Tibial artery (tissue), 4 donors: ENCODE measurements at regions of chr16 and their contacts with region 1.

Region 1: DNA sequence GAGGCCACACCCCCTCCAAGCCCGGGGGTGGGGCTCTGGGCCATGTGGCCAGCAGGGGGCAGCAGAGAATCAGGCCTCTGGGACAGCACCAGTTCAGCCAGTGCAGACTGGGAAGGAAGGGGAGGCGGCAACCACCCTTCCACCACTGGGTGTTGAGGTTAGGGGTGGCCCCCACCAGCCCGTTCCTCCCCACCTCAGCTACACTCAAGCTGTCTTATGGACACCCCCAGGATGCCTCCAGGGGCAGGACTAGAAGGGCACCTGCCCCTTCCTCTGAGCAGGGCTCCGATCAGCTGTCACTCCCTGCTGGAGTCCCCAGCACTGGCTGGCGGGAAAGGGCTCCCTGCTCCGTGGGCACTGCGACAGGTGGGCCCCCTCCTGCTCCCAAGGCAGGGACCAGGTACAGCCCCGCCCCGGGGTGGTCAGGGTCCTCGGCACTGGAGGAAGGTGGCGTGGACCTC is 21.8 kb downstream of the KATNB1 start:
- DNase-seq: peak; percentile 85 to 93
- H3K4me3 ChIP-seq: no peak overlapping the region
- H3K27ac ChIP-seq: peak overlapping the region in 1 of 2 donors; percentile 35
- H3K4me1 ChIP-seq: peaks cover 0 to 6% (median 2%) of the 10 kb centered on the region in 4 donors
- H3K27me3 ChIP-seq: no peaks in the 10 kb centered on the region
- CTCF ChIP-seq: peak; percentile 94 to 97

Region 2: GRCh38 chr16:57802341-57803133 is 45.2 kb after region 1 on chr16 and contains the start of gene KIFC3:
- intact Hi-C with region 1: no loop called
- DNase-seq: peak; percentile 82 to 92
- H3K4me3 ChIP-seq: peak within 1 kb of the TSS; percentile 60 to 73
- H3K27ac ChIP-seq: peak within 1 kb of the TSS; percentile 72 to 83
- H3K4me1 ChIP-seq: peaks cover 0 to 44% (median 32%) of the 10 kb centered on the region in 4 donors
- H3K27me3 ChIP-seq: no peaks in the 10 kb centered on the region
- CTCF ChIP-seq: peak; percentile 27 to 47

Region 3: DNA sequence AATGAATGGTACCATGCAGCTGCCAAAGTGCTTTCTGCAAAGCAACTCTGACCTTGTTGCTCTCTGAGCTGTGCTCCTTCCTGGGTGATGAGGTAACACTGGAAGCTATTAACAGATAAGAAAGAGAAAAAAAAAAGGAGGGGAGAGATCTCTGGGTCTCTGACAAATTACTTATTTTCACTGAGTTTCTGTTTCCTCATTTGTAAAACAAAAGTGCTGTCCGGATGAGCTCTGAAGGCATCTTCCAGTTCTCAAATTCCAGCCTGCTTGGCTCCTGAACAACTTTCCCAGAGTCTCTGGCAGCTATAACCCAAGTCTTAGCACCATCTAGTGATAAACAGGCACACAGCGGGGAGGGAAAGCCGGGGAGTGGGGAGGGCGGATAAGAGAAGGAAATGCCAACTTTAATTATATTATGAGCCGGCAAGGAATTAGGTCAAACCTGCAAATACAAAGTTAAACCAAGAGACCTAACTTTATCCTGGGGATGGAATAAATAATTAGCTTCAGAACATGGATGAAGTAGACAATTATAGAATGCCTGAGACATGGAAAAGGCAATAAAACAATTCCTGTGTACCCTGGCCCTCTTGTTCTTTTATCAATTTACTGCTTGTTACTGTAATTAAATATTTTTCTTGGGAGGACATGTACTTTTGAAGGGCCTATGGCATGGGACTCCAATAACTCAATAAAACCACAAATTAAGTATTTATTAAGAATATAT is 106.2 kb after region 1 on chr16:
- intact Hi-C with region 1: loop called (anchors 5 kb)
- DNase-seq: peak; percentile 65 to 73
- H3K4me3 ChIP-seq: no peak overlapping the region
- H3K27ac ChIP-seq: no peak overlapping the region
- H3K4me1 ChIP-seq: peaks cover 0 to 4% (median 2%) of the 10 kb centered on the region in 4 donors
- H3K27me3 ChIP-seq: peaks cover 0 to 12% of the 10 kb centered on the region in 2 donors
- CTCF ChIP-seq: peak; percentile 38 to 53

Region 4: DNA sequence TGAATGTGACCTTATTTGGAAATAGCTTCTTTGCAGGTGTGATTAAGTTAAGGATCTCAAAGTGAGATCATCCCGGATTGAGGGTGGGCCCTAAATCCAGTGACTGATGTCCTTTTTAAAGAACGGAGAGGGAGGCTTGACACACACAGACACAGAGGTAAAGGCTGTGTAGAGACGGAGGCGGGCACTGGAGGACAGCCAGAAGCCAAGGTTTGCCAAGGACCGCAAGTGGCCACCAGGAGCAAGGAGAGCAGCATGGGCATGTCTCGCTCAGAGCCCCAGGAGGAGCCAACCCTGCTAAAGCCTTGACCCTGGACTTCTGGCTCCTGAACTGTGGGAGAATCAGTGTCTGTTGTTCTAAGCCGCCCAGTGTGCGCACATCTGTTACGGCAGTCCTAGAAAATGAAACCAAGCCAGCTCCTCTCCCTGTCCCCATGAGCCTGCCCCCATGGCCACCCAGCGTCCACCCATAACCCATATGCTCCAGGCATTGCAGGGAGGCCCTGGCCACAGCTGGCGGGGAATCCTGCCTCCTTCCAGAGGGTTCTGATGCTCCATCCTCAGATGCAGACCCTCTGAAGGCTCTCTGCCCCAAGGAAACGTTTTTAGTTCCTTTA is 198.3 kb after region 1 on chr16:
- intact Hi-C with region 1: no loop called
- DNase-seq: no peak
- H3K4me3 ChIP-seq: no peak overlapping the region
- H3K27ac ChIP-seq: no peak overlapping the region
- H3K4me1 ChIP-seq: no peaks in the 10 kb centered on the region
- H3K27me3 ChIP-seq: peaks cover 0 to 33% of the 10 kb centered on the region in 2 donors
- CTCF ChIP-seq: no peak

Region 5: GRCh38 chr16:57994778-57995177 is 237.4 kb after region 1 on chr16:
- intact Hi-C with region 1: loop called (anchors 10 kb)
- DNase-seq: peak in 1 of 2 donors; percentile 59
- H3K4me3 ChIP-seq: no peak overlapping the region
- H3K27ac ChIP-seq: no peak overlapping the region
- H3K4me1 ChIP-seq: peaks cover 0 to 31% (median 17%) of the 10 kb centered on the region in 4 donors
- H3K27me3 ChIP-seq: no peaks in the 10 kb centered on the region
- CTCF ChIP-seq: no peak